H1 (cell line): ENCODE measurements at regions of chr4 and their contacts with region 1.

Region 1: DNA sequence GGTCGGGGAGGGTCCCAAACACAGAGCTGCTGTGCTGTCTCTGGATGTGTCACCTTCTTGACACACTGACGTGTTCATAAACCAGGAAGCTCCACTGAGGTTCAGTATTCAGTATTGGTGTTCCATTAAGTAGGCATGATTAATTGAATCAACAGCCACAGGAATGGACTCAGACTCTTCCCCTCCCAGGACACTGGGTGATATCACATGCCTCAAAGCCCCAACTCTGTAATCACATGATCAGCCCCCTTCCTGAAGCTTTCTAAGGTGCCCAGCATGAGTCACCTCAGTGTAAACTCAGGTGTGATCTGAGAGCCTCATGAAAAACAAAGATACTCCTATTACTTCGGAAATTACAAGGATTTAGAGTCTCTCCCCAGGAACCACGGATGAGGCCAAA is 21.1 kb upstream of the HNRNPD start:
- DNase-seq: no peak
- H3K4me3 ChIP-seq: no peak overlapping the region
- H3K27ac ChIP-seq: no peak overlapping the region
- H3K4me1 ChIP-seq: no peaks in the 10 kb centered on the region
- H3K27me3 ChIP-seq: no peaks in the 10 kb centered on the region
- CTCF ChIP-seq: no peak
- EP300 ChIP-seq: no peak
- POLR2A ChIP-seq: no peak
- RAD21 ChIP-seq: no peak

Region 2: DNA sequence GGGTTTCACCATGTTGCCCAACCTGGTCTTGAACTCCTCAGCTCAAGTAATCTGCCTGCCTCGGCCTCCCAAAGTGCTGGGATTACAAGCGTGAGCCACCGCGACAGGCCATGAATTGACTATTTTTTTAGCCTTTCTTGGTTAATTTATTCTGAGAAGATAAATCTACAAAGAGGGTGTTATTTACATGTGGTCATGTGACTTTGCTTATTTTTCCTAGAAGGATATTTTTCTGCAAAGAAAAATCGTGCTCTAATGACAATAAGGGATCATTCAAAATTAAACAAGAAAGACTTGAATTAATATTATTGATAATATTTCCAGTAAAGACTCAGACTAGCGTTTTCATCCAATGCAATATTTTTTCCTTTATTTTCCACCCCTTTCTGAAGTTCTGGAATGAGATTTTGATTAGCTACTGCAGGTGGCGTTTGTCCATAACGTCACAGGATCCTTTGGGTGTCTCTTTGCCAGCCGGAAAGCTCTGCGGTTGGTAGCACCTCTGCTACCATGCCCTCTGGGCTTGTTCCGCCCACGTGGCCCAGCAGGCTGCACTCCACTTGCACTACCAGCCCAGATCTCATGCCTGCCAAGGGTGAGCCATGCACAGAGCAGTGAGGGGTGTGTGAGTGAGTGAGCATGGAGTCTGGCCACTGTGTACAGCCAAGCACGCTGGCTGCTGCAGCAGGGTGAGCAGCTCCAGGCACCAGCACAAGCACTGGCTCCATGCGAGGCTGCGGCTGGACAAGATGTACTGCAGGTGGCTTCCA is 14.8 kb before region 1 on chr4:
- CTCF ChIA-PET with region 1: interaction called, 14 read pairs
- POLR2A ChIA-PET with region 1: interaction called, 10 read pairs
- DNase-seq: no peak
- H3K4me3 ChIP-seq: no peak overlapping the region
- H3K27ac ChIP-seq: no peak overlapping the region
- H3K4me1 ChIP-seq: peaks cover 0 to 3% (median 0%) of the 10 kb centered on the region in 4 experiments; a peak in 4 of 7 replicates
- H3K27me3 ChIP-seq: no peaks in the 10 kb centered on the region
- CTCF ChIP-seq: no peak
- EP300 ChIP-seq: no peak
- POLR2A ChIP-seq: no peak
- RAD21 ChIP-seq: no peak

Region 3: GRCh38 chr4:83197555-83198235 is 802.8 kb after region 1 on chr4:
- CTCF ChIA-PET with region 1: no interaction called
- POLR2A ChIA-PET with region 1: no interaction called
- DNase-seq: no peak
- H3K4me3 ChIP-seq: no peak overlapping the region
- H3K27ac ChIP-seq: no peak overlapping the region
- H3K4me1 ChIP-seq: peaks cover 0 to 5% (median 0%) of the 10 kb centered on the region in 4 experiments; a peak in 2 of 7 replicates
- H3K27me3 ChIP-seq: no peaks in the 10 kb centered on the region
- CTCF ChIP-seq: no peak
- EP300 ChIP-seq: no peak
- POLR2A ChIP-seq: no peak
- RAD21 ChIP-seq: no peak